ENCODE measurements at regions of chr21 and their contacts with region 1.

Region 1: GRCh38 chr21:45074048-45074817 is at the start of gene ADARB1:
- DNase-seq: peak; percentile 48 to 78
- ATAC-seq: peak; percentile 51 to 91 (median 72)
- H3K4me3 ChIP-seq: peak within 1 kb of the TSS; percentile 84 to 100 (median 89)
- H3K27ac ChIP-seq: peak within 1 kb of the TSS; percentile 83 to 97 (median 94)
- H3K4me1 ChIP-seq: peaks cover 4 to 48% (median 24%) of the 10 kb centered on the region in 9 donors
- H3K27me3 ChIP-seq: peaks cover 0 to 8% (median 0%) of the 10 kb centered on the region in 7 donors
- CTCF ChIP-seq: no peak
- total RNA-seq, gene ADARB1: 11.8 to 21.2 (median 13.5) TPM

Region 2: DNA sequence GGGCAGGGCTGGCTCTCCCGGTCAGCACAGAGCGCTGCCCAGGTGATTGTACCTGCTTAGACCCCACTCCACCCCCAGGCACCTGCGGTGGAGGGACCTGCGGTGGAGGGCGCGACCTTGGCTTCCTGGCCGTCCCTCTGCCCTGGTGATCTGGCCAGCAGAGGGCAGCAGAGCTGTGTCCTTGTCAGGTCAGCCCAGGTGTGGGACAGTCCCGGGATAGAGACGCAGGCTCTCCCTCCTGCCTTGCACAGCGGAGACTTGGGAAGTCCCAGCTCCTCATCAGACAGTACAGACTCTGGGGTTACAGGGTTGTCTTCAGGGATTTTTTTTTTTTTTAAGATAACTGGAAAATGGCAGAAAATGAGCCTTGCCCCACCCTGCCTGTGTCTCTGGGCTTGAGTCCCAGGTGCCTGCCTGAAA is 124.4 kb before region 1 on chr21:
- intact Hi-C with region 1: loop called in 2 of 10 experiments (anchors 5 to 10 kb)
- DNase-seq: peak; percentile 91 to 93
- ATAC-seq: peak; percentile 63 to 76 (median 67)
- H3K4me3 ChIP-seq: no peak overlapping the region
- H3K27ac ChIP-seq: peak overlapping the region; percentile 42 to 86 (median 79)
- H3K4me1 ChIP-seq: peaks cover 13 to 90% (median 53%) of the 10 kb centered on the region in 9 donors
- H3K27me3 ChIP-seq: no peaks in the 10 kb centered on the region
- CTCF ChIP-seq: peak; percentile 88 to 98 (median 96)

Region 3: DNA sequence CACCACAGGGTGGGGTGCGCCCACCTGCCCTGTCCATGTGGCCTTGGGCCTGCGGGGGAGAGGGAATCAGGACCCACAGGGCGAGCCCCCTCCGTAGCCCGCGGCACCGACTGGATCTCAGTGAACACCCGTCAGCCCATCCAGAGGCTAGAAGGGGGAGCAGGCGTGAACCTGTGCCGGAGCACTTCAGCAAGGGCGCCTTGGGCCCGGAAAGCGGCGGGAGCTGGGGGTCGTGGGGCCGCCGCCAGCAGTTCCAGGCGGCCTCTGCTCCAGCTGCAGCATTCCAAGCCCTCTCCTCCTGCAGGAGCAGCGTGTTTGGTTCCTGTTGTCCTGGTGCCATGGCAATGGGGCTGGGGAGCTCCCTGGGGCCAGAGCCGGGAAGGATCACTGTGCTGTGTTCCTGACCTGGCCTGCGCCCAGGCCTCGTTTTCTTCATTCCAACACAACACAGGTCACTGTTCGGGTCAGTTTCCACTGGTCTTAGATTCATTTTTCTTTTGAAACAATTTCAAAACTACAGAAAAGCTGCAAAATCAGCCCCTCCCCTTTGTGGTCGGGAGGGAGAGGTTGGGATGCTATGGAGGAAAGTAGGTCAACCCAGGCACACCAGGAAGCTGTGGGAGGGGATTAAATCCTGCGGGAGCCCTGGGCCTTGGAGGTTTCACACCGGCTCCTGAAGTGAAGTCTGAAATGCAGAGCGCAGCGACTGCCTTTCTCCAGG is 115.6 kb before region 1 on chr21:
- intact Hi-C with region 1: loop called in 3 of 10 experiments (anchors 5 to 10 kb)
- DNase-seq: peak; percentile 86 to 92
- ATAC-seq: peak; percentile 67 to 90 (median 84)
- H3K4me3 ChIP-seq: peak overlapping the region in 7 of 10 donors; percentile 1 to 27 (median 17)
- H3K27ac ChIP-seq: peak overlapping the region; percentile 47 to 85 (median 77)
- H3K4me1 ChIP-seq: peaks cover 30 to 99% (median 62%) of the 10 kb centered on the region in 9 donors
- H3K27me3 ChIP-seq: no peaks in the 10 kb centered on the region
- CTCF ChIP-seq: no peak

Region 4: DNA sequence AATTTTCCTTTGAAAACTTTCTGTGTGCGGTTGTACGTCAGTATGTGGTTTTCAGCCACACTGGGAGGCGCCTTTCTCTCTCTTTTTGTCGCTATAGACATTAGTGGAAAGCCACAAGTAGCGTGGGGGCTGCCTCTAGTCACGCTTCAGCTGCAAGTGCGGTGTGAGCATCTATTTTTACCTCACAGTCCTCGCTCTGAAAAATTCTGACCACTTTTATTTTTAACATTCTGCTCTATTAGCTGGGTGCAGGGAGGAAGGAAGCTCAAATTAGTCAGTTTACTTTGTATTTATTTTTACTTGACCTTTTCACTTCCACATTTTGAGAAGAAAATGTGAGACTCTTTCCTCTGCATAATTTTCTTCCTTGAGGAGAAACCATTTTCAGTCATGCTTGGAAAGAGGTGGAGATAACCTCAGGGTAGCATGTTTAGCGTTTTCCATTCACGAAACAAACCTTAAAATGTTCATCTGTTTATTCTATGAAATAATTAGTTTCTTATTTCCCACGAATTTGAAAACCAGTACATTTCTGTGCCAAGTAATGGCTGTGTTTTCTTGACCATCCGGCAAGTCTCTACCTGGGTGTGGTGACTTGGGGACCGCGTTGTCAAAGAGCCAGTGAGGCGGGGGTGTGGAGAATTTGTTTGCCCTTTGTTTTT is 35.7 kb after region 1 on chr21:
- intact Hi-C with region 1: loop called in 1 of 10 experiments (anchors 5 kb)
- DNase-seq: no peak
- ATAC-seq: peak in 7 of 8 donors; percentile 9 to 78 (median 52)
- H3K4me3 ChIP-seq: peak overlapping the region in 6 of 10 donors; percentile 11 to 38 (median 20)
- H3K27ac ChIP-seq: peak overlapping the region in 9 of 10 donors; percentile 35 to 84 (median 72)
- H3K4me1 ChIP-seq: peaks cover 14 to 96% (median 72%) of the 10 kb centered on the region in 9 donors
- H3K27me3 ChIP-seq: no peaks in the 10 kb centered on the region
- CTCF ChIP-seq: no peak

Region 5: DNA sequence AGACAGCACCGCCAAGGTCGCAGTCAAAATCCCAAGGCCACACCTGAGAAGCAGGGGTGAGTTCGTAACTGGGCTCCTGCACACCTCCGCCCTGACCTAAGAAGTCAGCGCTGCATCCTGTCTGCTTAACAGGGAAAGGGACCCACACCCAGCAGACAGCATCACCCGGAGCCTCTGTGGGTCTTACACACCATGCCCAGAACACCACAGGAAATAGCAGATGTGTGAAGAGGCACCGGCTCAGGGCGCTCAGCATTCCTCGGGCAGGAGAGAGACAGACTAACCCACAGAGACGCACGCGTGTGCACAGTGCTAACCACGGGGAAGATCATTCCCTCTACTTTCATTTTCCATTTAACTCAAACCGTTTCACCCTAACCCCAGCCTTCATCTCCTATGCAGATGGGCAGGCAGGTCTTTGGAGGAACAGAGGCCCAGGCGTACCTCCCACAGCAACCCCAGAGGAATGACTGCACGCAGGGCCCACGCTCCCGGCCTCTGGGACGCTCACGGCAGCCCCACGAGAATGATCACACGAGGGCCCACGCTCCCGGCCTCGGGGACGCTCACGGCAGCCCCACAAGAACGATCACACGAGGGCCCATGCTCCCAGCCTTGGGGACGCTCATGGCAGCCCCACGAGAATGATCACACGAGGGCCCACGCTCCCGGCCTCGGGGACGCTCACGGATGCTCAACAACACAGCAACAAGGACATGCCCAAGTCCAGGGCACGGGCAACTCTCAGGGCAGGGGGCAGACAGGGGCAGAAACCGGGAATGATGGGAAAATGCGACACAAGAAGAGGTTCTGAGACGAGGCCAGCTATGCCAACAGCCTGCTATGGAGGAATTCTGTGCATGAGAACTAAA is 192.5 kb after region 1 on chr21:
- intact Hi-C with region 1: no loop called
- DNase-seq: no peak
- ATAC-seq: peak in 7 of 8 donors; percentile 8 to 42 (median 27)
- H3K4me3 ChIP-seq: no peak overlapping the region
- H3K27ac ChIP-seq: peak overlapping the region in 1 of 10 donors; percentile 44
- H3K4me1 ChIP-seq: peaks cover 0 to 5% (median 0%) of the 10 kb centered on the region in 9 donors
- H3K27me3 ChIP-seq: no peaks in the 10 kb centered on the region
- CTCF ChIP-seq: no peak

Measured in heart right ventricle (tissue), 16 donors.